CD8-positive, alpha-beta T cell (primary cell): ENCODE measurements at regions of chr10 and their contacts with region 1.

Region 1: DNA sequence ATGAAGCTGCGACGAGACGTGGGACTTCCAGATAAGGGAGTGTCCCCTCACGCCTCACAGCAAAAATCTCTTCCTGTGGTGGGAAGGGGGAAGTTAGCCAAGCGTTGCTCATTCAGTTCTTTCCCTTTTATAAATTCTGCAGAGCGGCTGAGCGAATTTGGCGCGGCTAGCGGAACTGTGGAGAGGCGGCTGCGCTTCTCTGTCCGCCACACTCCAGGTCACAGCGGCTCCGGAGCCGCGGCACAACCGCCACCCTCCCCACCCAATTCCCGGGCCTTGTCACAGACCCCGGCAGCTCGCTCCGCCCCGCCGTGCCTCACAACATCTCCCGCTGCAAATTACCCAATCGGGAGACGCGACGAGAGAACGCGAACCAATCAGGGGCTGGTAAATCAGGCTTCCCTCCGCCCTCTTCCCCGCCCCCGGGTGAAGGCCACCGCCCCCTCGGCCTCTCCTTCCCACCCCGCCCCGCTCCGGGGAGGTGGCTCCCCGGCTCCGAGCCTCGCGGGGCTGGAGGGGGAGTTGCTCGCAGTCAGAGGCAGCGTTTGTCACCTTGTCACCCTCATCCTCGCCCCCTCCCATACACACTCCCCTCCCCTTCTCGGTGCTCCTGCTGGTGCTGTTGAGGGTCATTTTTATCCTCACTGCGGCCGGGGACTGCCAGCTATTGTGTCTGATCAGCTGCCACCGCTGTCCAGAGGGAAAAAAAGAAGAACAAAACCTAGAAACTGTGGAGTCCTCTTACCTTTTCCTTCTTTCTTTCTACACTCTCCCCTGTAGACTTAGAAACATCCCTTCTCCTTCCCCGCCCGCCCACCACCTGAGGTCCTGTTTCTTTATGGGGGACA is 918 bp upstream of the ARHGAP21 start:
- DNase-seq: peak; percentile 91 to 97 (median 96)
- ATAC-seq: peak; percentile 86
- H3K4me3 ChIP-seq: peak overlapping the region; percentile 80 to 93
- H3K4me3 Mint-ChIP-seq: peak overlapping the region; percentile 94
- H3K27ac ChIP-seq: peak overlapping the region; percentile 48 to 69
- H3K27ac Mint-ChIP-seq: peak overlapping the region; percentile 94
- H3K4me1 ChIP-seq: peaks cover 15% of the 10 kb centered on the region
- H3K4me1 Mint-ChIP-seq: peaks cover 24% of the 10 kb centered on the region
- H3K27me3 ChIP-seq: no peaks in the 10 kb centered on the region
- H3K27me3 Mint-ChIP-seq: no peaks in the 10 kb centered on the region
- CTCF ChIP-seq: no peak

Region 2: GRCh38 chr10:24642622-24643417 is 81.8 kb before region 1 on chr10:
- CTCF ChIA-PET with region 1: interaction called, 5 read pairs
- POLR2A ChIA-PET with region 1: no interaction called
- intact Hi-C with region 1: loop called (anchors 1 to 5 kb)
- DNase-seq: peak in 3 of 9 experiments; percentile 13 to 75 (median 62)
- ATAC-seq: peak; percentile 92
- H3K4me3 ChIP-seq: no peak overlapping the region
- H3K4me3 Mint-ChIP-seq: no peak overlapping the region
- H3K27ac ChIP-seq: no peak overlapping the region
- H3K27ac Mint-ChIP-seq: no peak overlapping the region
- H3K4me1 ChIP-seq: peaks cover 4% of the 10 kb centered on the region
- H3K4me1 Mint-ChIP-seq: no peaks in the 10 kb centered on the region
- H3K27me3 ChIP-seq: no peaks in the 10 kb centered on the region
- H3K27me3 Mint-ChIP-seq: no peaks in the 10 kb centered on the region
- CTCF ChIP-seq: peak; percentile 84

Region 3: DNA sequence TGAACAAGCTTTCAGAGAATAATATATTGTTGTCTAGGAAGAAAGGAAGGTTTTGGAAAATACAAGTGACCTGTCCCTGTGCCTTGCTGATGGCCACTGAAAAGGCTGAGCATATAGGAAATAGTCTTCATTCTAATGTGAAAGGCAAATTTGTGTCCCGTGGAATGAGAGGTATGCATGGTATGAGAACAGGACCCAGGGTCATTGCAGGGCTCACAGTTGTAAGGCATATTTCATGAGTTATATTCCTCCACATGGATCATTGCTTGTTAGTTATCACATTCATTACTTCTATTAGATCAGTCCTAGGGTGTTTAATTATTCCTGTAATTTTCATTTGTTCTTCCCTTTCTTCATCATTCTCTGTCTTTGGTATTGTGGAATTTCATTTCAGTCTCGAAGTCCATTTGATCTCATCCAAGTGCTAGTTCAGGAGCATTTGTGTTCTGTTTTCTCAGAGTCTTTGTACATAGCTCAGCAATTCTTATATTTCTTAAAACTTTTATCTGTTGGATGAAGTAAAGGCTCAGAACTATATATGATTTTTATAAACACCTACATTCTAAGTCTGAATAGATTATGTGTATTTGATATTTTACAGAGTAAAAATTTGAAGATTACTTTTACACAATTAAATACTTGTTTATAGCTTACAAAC is 38.5 kb after region 1 on chr10:
- CTCF ChIA-PET with region 1: no interaction called
- POLR2A ChIA-PET with region 1: no interaction called
- intact Hi-C with region 1: no loop called
- DNase-seq: no peak
- ATAC-seq: no peak
- H3K4me3 ChIP-seq: no peak overlapping the region
- H3K4me3 Mint-ChIP-seq: no peak overlapping the region
- H3K27ac ChIP-seq: no peak overlapping the region
- H3K27ac Mint-ChIP-seq: no peak overlapping the region
- H3K4me1 ChIP-seq: no peaks in the 10 kb centered on the region
- H3K4me1 Mint-ChIP-seq: peaks cover 3% of the 10 kb centered on the region
- H3K27me3 ChIP-seq: no peaks in the 10 kb centered on the region
- H3K27me3 Mint-ChIP-seq: no peaks in the 10 kb centered on the region
- CTCF ChIP-seq: no peak

Region 4: GRCh38 chr10:24882047-24882698 is 157.6 kb after region 1 on chr10:
- CTCF ChIA-PET with region 1: interaction called, 8 read pairs
- POLR2A ChIA-PET with region 1: interaction called, 3 read pairs
- intact Hi-C with region 1: loop called (anchors 1 to 5 kb)
- DNase-seq: peak; percentile 29 to 86 (median 59)
- ATAC-seq: peak; percentile 84
- H3K4me3 ChIP-seq: peak overlapping the region; percentile 23 to 48
- H3K4me3 Mint-ChIP-seq: peak overlapping the region; percentile 86
- H3K27ac ChIP-seq: peak overlapping the region; percentile 44 to 46
- H3K27ac Mint-ChIP-seq: peak overlapping the region; percentile 96
- H3K4me1 ChIP-seq: peaks cover 59% of the 10 kb centered on the region
- H3K4me1 Mint-ChIP-seq: peaks cover 66% of the 10 kb centered on the region
- H3K27me3 ChIP-seq: no peaks in the 10 kb centered on the region
- H3K27me3 Mint-ChIP-seq: no peaks in the 10 kb centered on the region
- CTCF ChIP-seq: no peak

Region 5: DNA sequence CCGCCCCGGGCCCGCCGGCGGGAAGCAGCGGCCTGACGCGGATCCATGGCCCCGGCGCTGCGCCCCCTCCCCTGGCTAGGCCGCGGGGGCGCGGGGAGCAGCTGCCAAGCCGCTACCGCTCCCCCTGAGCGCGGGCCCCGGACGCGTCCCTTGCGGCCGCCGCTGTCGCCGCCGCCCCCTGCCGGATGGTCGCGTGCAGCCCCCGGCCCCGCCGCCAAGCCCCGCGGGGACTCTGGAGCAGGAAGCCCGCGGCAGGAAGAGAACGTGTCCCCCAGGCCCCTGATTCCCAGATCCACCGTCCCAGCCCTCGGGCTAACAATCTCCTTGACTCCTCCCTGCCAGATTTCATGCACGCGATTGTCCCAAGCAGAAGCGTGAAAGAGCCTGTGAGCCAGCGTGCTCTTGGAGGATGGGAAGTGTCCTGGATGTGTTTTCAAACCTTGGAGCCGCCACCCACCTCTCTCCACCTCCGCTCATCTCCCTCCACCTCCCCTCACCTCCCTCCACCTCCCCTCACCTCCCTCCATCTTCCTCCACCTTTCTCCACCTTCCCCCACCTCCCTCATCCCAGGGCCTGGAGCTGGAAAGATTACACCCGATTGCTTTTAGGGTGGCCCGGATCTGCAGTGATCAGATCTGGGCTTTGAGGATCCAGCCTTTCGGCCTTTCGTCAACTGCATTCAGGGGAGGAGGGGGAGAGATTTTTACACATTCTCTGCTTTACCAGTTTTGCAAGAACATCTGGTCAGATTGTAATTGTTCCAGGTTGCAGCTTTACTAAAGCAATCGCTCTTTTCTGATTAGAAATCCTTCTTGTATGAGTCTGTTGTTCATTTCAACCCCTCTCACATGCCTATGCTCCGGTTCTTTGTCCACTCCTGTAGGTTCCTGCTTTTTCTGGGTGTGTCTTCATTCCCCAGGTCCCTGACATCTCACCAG is 228.4 kb after region 1 on chr10:
- CTCF ChIA-PET with region 1: interaction called, 21 read pairs
- POLR2A ChIA-PET with region 1: interaction called, 20 read pairs
- intact Hi-C with region 1: loop called (anchors 1 to 2 kb)
- DNase-seq: peak; percentile 25 to 84 (median 60)
- ATAC-seq: peak; percentile 82
- H3K4me3 ChIP-seq: peak overlapping the region; percentile 63 to 77
- H3K4me3 Mint-ChIP-seq: peak overlapping the region; percentile 82
- H3K27ac ChIP-seq: peak overlapping the region; percentile 31 to 35
- H3K27ac Mint-ChIP-seq: peak overlapping the region; percentile 84
- H3K4me1 ChIP-seq: peaks cover 15% of the 10 kb centered on the region
- H3K4me1 Mint-ChIP-seq: peaks cover 18% of the 10 kb centered on the region
- H3K27me3 ChIP-seq: no peaks in the 10 kb centered on the region
- H3K27me3 Mint-ChIP-seq: no peaks in the 10 kb centered on the region
- CTCF ChIP-seq: peak; percentile 63

Region 6: DNA sequence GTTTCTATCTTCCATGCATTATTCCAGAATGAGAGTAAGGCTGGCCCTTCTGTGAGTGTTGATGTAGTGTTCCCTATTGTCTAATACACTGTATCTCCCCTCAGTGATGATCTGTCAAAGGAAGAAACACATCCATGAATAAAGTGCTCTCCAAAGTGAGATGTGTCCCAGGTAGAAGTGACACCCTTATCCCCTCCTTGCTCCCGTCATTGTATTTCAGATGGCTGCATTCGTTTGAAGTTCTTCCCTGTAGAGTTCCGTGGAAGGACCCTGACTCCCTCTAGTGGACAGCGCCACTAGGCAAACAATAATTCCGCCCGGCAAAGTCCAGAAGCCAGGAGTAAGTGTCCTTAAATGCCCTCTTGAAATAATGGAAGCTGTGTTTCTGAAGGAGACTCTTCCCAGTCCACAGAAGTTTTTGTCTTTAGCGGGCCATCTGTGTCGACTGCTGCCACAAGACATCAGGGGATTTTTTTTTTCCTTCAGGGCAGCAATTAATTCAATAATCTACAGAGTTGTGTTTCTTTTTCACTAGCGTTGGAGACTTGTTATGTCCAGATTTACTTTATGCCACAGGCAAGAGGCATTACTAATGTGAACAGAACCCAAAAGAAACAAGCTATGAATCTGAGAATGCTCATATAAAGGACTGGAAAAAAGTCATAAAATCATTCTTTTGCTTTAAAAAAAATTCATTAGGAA is 356.4 kb after region 1 on chr10:
- CTCF ChIA-PET with region 1: interaction called, 8 read pairs
- POLR2A ChIA-PET with region 1: no interaction called
- intact Hi-C with region 1: loop called in 1 of 2 experiments (anchors 2 kb)
- DNase-seq: peak; percentile 15 to 73 (median 60)
- ATAC-seq: peak; percentile 51
- H3K4me3 ChIP-seq: no peak overlapping the region
- H3K4me3 Mint-ChIP-seq: no peak overlapping the region
- H3K27ac ChIP-seq: no peak overlapping the region
- H3K27ac Mint-ChIP-seq: no peak overlapping the region
- H3K4me1 ChIP-seq: no peaks in the 10 kb centered on the region
- H3K4me1 Mint-ChIP-seq: peaks cover 3% of the 10 kb centered on the region
- H3K27me3 ChIP-seq: no peaks in the 10 kb centered on the region
- H3K27me3 Mint-ChIP-seq: peaks cover 7% of the 10 kb centered on the region
- CTCF ChIP-seq: peak; percentile 71